Caco-2 (cell line): ENCODE measurements at regions of chrX and their contacts with region 1.

Region 1: DNA sequence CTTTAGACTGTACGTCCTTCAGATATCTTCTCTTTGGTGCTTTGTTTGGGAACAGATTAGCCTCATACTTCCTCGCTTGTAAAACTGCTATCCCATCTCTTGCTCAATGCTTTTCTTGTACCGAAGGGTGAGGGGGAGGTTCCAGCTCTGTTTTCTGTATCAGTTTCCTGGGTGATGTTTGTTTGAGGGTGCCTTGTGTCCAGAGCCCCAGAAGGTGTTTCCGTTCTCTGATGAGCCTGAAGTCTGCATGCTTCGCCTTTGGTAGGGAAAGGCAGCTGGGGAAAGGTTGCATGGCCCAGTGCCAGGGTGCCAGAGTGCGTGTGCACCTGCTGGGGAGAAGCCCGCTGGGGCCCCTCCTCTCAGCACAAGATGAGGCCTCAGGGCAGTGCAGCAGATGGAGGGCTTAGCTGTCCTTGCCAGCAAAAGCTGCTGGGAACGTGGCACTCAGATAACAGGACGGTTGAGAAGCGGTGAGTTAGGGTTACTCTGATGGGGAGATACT is 73.7 kb downstream of the TBL1X start:
- DNase-seq: peak; percentile 35 to 64
- H3K4me3 ChIP-seq: no peak overlapping the region
- H3K4me3 Mint-ChIP-seq: peak overlapping the region; percentile 33
- H3K27ac Mint-ChIP-seq: peak overlapping the region; percentile 86
- H3K4me1 ChIP-seq: 0 out of 2 replicates have a peak, but pooled peaks cover 4% of the 10 kb centered on the region
- H3K4me1 Mint-ChIP-seq: peaks cover 9% of the 10 kb centered on the region
- H3K27me3 ChIP-seq: no peaks in the 10 kb centered on the region
- H3K27me3 Mint-ChIP-seq: no peaks in the 10 kb centered on the region
- CTCF ChIP-seq: no peak

Region 2: DNA sequence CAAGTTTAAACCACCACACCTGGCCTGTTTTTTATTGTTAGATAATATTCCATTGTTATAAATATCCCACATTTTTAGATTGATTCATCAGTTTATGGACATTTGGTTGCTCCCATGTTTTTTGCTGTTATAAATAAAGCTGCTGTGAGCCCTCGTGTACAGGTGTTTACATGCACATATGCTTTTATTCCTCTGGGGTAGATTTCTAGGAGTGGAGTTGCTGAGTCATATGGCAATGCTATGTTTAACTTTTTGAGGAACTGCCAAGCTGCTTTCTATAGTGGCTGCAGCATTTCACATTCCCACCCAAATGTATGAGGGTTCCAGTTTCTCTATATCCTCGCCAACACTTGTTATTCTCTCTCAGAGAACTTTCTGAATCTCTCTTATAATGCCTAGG is 16.8 kb after region 1 on chrX:
- CTCF ChIA-PET with region 1: no interaction called
- POLR2A ChIA-PET with region 1: no interaction called
- intact Hi-C with region 1: no loop called
- DNase-seq: no peak
- H3K4me3 ChIP-seq: no peak overlapping the region
- H3K4me3 Mint-ChIP-seq: no peak overlapping the region
- H3K27ac Mint-ChIP-seq: no peak overlapping the region
- H3K4me1 ChIP-seq: no peaks in the 10 kb centered on the region
- H3K4me1 Mint-ChIP-seq: peaks cover 11% of the 10 kb centered on the region
- H3K27me3 ChIP-seq: no peaks in the 10 kb centered on the region
- H3K27me3 Mint-ChIP-seq: no peaks in the 10 kb centered on the region
- CTCF ChIP-seq: no peak

Region 3: DNA sequence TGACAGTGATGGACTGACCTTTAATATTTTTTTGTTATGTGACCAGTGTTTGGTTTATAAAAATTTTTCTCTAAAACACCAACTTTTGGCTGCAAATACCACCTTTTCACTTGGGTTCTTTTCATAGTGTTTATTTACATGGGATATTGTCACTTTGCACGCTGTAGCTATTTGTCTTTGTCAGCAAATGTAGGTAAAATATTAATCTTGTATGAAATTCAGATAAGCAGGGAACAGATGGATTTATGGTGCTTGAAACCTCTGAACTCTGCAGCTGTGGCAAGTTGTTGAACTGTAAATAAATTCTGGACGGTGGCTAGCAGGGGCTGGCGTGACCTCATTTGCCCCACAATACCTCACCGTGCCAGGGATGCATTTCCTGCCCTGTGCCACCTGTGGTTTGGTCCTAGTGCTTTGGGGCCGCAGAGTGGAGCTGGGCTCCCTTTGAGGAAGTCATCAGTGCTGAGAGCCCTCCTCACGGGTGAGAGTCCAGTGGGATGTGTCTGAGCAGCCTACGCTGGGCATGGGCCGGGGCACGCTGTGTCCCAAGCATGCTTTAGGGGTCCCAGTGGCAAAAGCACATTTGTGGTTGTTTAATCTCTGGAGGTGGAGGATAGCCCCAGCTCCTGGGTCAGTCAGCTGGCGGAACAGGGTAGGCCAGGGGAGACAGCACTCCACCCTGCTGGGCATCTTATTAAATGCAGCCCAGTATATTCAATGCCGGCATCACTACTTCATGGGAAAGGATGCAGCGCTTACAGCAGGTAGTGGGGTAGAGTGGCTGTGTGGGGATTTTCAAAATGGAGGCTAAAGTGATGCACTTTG is 34.9 kb after region 1 on chrX:
- CTCF ChIA-PET with region 1: no interaction called
- POLR2A ChIA-PET with region 1: no interaction called
- intact Hi-C with region 1: loop called (anchors 5 kb)
- DNase-seq: peak in 1 of 2 experiments; percentile 2
- H3K4me3 ChIP-seq: no peak overlapping the region
- H3K4me3 Mint-ChIP-seq: no peak overlapping the region
- H3K27ac Mint-ChIP-seq: no peak overlapping the region
- H3K4me1 ChIP-seq: peaks cover 20% of the 10 kb centered on the region
- H3K4me1 Mint-ChIP-seq: peaks cover 15% of the 10 kb centered on the region
- H3K27me3 ChIP-seq: no peaks in the 10 kb centered on the region
- H3K27me3 Mint-ChIP-seq: no peaks in the 10 kb centered on the region
- CTCF ChIP-seq: no peak

Region 4: GRCh38 chrX:9595131-9595530 is 56.5 kb after region 1 on chrX:
- CTCF ChIA-PET with region 1: no interaction called
- POLR2A ChIA-PET with region 1: no interaction called
- intact Hi-C with region 1: no loop called
- DNase-seq: no peak
- H3K4me3 ChIP-seq: no peak overlapping the region
- H3K4me3 Mint-ChIP-seq: no peak overlapping the region
- H3K27ac Mint-ChIP-seq: no peak overlapping the region
- H3K4me1 ChIP-seq: no peaks in the 10 kb centered on the region
- H3K4me1 Mint-ChIP-seq: no peaks in the 10 kb centered on the region
- H3K27me3 ChIP-seq: no peaks in the 10 kb centered on the region
- H3K27me3 Mint-ChIP-seq: no peaks in the 10 kb centered on the region
- CTCF ChIP-seq: no peak

Region 5: DNA sequence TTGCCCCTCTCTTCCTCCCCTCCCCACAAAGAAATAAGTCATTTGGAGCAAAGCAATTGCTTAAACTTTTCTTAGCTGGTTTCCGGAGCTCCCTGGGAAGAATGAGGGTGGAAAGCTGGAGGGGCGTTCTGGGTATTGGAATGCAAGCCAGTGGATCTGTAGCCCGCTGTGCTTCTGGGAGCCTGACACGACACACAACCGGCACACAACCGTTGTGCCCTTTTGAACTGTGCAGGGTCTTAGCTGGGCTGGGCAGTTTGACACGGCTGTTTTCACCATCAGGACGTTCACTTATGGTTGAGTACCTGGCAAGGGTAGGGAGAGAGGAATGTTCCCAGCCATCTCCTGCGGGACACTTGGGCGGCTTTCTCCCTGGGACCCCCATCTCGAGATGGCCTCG is 286.0 kb after region 1 on chrX:
- CTCF ChIA-PET with region 1: no interaction called
- POLR2A ChIA-PET with region 1: no interaction called
- intact Hi-C with region 1: no loop called
- DNase-seq: no peak
- H3K4me3 ChIP-seq: no peak overlapping the region
- H3K4me3 Mint-ChIP-seq: no peak overlapping the region
- H3K27ac Mint-ChIP-seq: no peak overlapping the region
- H3K4me1 ChIP-seq: no peaks in the 10 kb centered on the region
- H3K4me1 Mint-ChIP-seq: no peaks in the 10 kb centered on the region
- H3K27me3 ChIP-seq: no peaks in the 10 kb centered on the region
- H3K27me3 Mint-ChIP-seq: no peaks in the 10 kb centered on the region
- CTCF ChIP-seq: no peak